ENCODE measurements at regions of chr9 and their contacts with region 1.

Region 1: DNA sequence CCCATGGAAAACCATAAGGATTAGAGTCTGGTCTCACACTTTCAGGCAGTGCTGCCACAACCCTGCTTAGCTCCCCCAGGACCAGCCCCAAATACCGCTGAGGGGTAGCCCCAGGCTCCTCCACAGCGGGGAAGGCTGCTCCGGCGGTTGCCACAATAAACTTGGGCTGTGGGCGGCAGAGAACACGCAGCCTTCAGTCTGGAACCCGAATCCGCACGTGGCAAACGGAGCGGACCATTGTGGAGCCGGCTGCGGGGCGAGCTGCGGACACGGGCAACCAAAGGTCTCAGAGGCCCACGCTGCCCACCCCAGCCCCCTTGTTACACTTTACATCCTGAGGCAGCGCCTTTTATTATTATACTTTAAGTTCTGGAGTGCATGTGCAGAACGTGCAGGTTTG is 37.3 kb upstream of the C9orf72 start:
- DNase-seq: no peak
- H3K4me3 Mint-ChIP-seq: no peak overlapping the region
- H3K27ac Mint-ChIP-seq: no peak overlapping the region
- H3K4me1 Mint-ChIP-seq: peaks cover 6% of the 10 kb centered on the region
- H3K27me3 Mint-ChIP-seq: peaks cover 7% of the 10 kb centered on the region

Region 2: GRCh38 chr9:27664121-27664779 is 53.6 kb after region 1 on chr9:
- intact Hi-C with region 1: loop called (anchors 1 kb)
- DNase-seq: no peak
- H3K4me3 Mint-ChIP-seq: no peak overlapping the region
- H3K27ac Mint-ChIP-seq: no peak overlapping the region
- H3K4me1 Mint-ChIP-seq: peaks cover 14% of the 10 kb centered on the region
- H3K27me3 Mint-ChIP-seq: peaks cover 7% of the 10 kb centered on the region

Region 3: GRCh38 chr9:27688954-27689353 is 78.3 kb after region 1 on chr9:
- intact Hi-C with region 1: no loop called
- DNase-seq: no peak
- H3K4me3 Mint-ChIP-seq: no peak overlapping the region
- H3K27ac Mint-ChIP-seq: no peak overlapping the region
- H3K4me1 Mint-ChIP-seq: peaks cover 2% of the 10 kb centered on the region
- H3K27me3 Mint-ChIP-seq: peaks cover 1% of the 10 kb centered on the region